ENCODE measurements at regions of chr15 and their contacts with region 1.

Region 1: DNA sequence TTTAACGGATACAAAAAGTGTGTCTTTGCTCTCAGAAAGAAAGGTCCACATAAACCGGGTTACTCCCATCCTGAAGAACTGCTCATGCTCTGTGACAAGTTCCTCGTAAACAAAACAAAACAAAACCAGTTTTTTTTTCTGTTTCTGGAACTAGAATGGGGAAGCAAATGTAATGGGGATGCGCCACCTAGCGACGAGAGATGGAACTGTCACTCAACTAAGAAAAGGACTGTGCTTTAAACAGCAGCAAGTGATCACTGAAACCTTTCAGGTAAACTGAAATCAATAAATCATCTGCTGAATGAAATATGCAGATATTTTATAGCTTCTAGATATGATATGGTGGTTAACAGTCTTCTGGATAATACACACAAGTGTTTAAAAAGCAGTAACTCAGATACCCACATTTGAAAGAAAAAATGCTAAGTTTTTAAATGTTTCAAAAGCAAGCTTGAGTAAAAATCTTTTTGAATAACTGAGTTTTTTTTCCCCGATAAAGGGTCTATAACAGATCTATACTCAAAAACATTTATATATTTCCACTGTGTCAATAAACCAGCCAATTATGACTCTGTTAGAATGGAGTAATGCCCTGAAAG is 10.9 kb downstream of the TM2D3 start:
- DNase-seq: peak; percentile 86
- H3K4me3 Mint-ChIP-seq: no peak overlapping the region
- H3K27ac Mint-ChIP-seq: peak overlapping the region; percentile 71
- H3K4me1 Mint-ChIP-seq: peaks cover 29% of the 10 kb centered on the region
- H3K27me3 Mint-ChIP-seq: no peaks in the 10 kb centered on the region

Region 2: DNA sequence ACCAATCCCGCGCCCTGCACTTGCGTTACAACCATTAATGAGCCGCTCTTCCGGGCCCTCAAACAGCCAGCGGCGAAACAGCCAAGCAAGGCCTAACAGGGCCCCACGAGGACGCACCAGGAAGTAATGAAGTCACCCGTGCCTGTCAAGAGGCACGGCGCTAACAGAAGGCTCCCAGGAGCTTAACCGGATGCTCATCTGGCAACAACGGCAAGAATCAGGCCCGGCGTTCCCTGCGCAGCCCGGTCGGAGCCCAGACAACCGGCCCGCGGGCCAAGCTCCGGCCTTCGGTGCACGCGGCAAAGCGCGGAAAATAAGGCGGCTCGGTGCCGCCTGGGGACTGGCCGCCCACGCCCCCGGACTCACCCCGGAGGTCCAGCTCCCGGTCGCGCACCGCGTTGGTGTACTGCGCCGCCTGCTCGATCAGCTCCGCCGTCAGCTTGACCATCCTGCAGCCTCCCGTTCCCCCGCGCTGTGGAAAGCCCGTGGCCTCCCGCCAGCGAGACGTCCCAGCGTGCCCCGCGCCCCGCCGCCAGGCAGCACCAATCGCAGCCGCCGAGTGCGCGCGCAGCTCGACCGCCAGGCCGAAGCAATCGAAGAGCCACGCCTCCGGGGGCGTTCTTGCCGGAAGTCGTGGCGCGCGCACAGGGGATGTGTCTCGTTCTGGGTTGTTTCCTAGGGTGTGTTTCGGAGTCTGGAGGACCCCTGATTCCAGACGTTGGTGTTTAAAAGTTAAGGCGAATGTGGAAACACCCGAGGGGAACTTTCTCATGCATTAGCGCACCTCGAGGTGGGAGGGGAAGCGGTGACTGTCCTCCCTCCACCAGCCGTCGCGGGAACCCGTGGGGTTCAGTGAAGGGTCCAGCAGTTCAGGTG is 346.3 kb before region 1 on chr15 and contains the start of gene SNRPA1:
- CTCF ChIA-PET with region 1: interaction called, 49 read pairs
- POLR2A ChIA-PET with region 1: no interaction called
- intact Hi-C with region 1: loop called (anchors 1 kb)
- DNase-seq: peak; percentile 98
- H3K4me3 Mint-ChIP-seq: peak within 1 kb of the TSS; percentile 95
- H3K27ac Mint-ChIP-seq: peak within 1 kb of the TSS; percentile 98
- H3K4me1 Mint-ChIP-seq: peaks cover 38% of the 10 kb centered on the region
- H3K27me3 Mint-ChIP-seq: no peaks in the 10 kb centered on the region
- total RNA-seq, gene SNRPA1: 167 to 173 TPM

Region 3: DNA sequence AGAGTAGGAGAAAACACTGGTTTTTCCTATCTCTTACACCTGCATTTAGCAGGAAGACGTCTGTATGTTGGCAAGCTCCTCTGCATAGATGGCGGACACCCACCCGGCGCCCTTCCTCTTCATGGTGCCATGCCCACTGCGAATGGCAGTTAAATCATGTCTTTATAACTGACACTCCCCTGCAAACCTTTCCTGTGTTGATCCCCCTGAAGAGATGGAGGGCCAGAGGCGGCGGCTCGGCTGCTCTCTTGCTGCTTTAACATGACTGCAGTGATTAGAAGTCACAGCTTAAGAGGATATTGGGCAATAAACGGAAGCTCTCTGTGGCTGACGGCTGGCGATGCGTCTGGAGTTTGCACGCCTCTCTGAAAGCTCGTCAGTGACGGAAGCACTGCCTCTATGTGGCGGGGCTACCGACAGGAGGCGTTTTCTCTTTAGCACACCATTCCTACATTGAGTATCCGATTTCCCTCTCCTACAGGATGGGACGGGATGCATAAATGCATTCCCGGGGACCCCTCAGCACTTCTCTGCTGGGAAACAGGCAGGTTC is 320.7 kb before region 1 on chr15:
- CTCF ChIA-PET with region 1: interaction called, 32 read pairs
- POLR2A ChIA-PET with region 1: no interaction called
- intact Hi-C with region 1: no loop called
- DNase-seq: peak; percentile 81
- H3K4me3 Mint-ChIP-seq: peak overlapping the region; percentile 64
- H3K27ac Mint-ChIP-seq: peak overlapping the region; percentile 59
- H3K4me1 Mint-ChIP-seq: peaks cover 11% of the 10 kb centered on the region
- H3K27me3 Mint-ChIP-seq: no peaks in the 10 kb centered on the region

Region 4: GRCh38 chr15:101600035-101600434 is 41.2 kb before region 1 on chr15:
- CTCF ChIA-PET with region 1: no interaction called
- POLR2A ChIA-PET with region 1: no interaction called
- intact Hi-C with region 1: no loop called
- DNase-seq: no peak
- H3K4me3 Mint-ChIP-seq: no peak overlapping the region
- H3K27ac Mint-ChIP-seq: no peak overlapping the region
- H3K4me1 Mint-ChIP-seq: no peaks in the 10 kb centered on the region
- H3K27me3 Mint-ChIP-seq: peaks cover 42% of the 10 kb centered on the region

Region 5: GRCh38 chr15:101625980-101626379 is 15.3 kb before region 1 on chr15:
- CTCF ChIA-PET with region 1: interaction called, 10 read pairs
- POLR2A ChIA-PET with region 1: no interaction called
- intact Hi-C with region 1: no loop called
- DNase-seq: no peak
- H3K4me3 Mint-ChIP-seq: no peak overlapping the region
- H3K27ac Mint-ChIP-seq: no peak overlapping the region
- H3K4me1 Mint-ChIP-seq: peaks cover 39% of the 10 kb centered on the region
- H3K27me3 Mint-ChIP-seq: no peaks in the 10 kb centered on the region

Measured in activated CD4-positive, alpha-beta memory T cell treated with anti-CD3 and anti-CD28 coated beads for 36 hours (primary cell).